ENCODE measurements at regions of chr10 and their contacts with region 1.

Region 1: GRCh38 chr10:87887548-87888289 is 24.3 kb downstream of the PTEN start:
- DNase-seq: no peak
- ATAC-seq: peak in 1 of 8 donors; percentile 18
- H3K4me3 ChIP-seq: no peak overlapping the region
- H3K27ac ChIP-seq: no peak overlapping the region
- H3K4me1 ChIP-seq: peaks cover 0 to 70% (median 17%) of the 10 kb centered on the region in 9 donors
- H3K27me3 ChIP-seq: no peaks in the 10 kb centered on the region
- CTCF ChIP-seq: no peak

Region 2: DNA sequence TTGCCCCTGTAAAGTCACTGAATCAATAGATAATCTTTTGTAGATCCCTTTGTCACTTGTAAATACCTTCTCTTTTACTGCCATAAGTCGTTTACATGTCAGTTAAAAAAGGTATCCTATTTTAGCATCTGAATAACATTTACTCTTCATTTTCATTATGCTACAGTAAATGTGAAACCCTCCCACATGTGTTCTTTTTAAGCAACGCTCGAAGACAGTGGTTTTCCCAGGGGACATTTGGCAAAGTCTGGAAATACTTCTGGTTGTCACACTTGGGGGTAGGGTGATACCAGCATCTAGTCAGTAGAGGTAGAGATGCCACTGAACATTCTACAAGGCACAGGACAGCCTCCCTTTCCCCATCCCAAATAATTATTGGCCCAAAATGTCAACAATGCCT is 93.4 kb before region 1 on chr10:
- intact Hi-C with region 1: no loop called
- DNase-seq: no peak
- ATAC-seq: peak in 1 of 8 donors; percentile 31
- H3K4me3 ChIP-seq: no peak overlapping the region
- H3K27ac ChIP-seq: peak overlapping the region in 1 of 10 donors; percentile 29
- H3K4me1 ChIP-seq: peaks cover 0 to 37% (median 13%) of the 10 kb centered on the region in 9 donors
- H3K27me3 ChIP-seq: no peaks in the 10 kb centered on the region
- CTCF ChIP-seq: no peak

Region 3: GRCh38 chr10:87817609-87818504 is 69.9 kb before region 1 on chr10 and contains the start of gene ATAD1:
- intact Hi-C with region 1: no loop called
- DNase-seq: peak; percentile 82 to 84
- ATAC-seq: peak; percentile 98 to 99 (median 98)
- H3K4me3 ChIP-seq: peak within 1 kb of the TSS; percentile 43 to 87 (median 76)
- H3K27ac ChIP-seq: peak within 1 kb of the TSS; percentile 40 to 97 (median 90)
- H3K4me1 ChIP-seq: peaks cover 0 to 45% (median 31%) of the 10 kb centered on the region in 9 donors
- H3K27me3 ChIP-seq: no peaks in the 10 kb centered on the region
- CTCF ChIP-seq: peak in 4 of 9 donors; percentile 31 to 53 (median 42)
- total RNA-seq, gene ATAD1: 90.4 to 147 (median 100) TPM

Region 4: DNA sequence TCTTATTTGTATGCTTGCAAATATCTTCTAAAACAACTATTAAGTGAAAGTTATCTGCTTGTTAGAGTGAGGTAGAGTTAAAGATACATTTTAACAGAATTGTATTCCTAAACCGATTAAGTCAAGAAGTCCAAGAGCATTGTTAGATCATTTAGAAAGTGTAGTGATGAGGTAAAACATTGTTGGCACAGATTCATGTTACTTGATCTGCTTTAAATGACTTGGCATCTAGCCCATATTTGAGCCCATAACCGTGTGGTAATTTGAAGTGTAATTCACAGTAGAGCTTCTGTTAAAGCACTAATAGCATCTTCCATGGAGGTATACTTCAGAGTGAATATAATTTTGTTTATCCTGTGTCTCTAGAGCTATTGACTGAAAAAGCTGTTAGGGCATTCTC is 37.9 kb after region 1 on chr10:
- intact Hi-C with region 1: loop called in 1 of 10 experiments (anchors 5 kb)
- DNase-seq: no peak
- ATAC-seq: peak in 2 of 8 donors; percentile 8 to 25
- H3K4me3 ChIP-seq: no peak overlapping the region
- H3K27ac ChIP-seq: no peak overlapping the region
- H3K4me1 ChIP-seq: peaks cover 5 to 94% (median 76%) of the 10 kb centered on the region in 9 donors
- H3K27me3 ChIP-seq: no peaks in the 10 kb centered on the region
- CTCF ChIP-seq: no peak